CD4-positive, alpha-beta T cell (primary cell): ENCODE measurements at regions of chr12 and their contacts with region 1.

Region 1: GRCh38 chr12:13278249-13278787 is 81.8 kb downstream of the EMP1 start:
- DNase-seq: peak; percentile 18 to 77 (median 52)
- ATAC-seq: peak; percentile 91
- H3K4me3 ChIP-seq: no peak overlapping the region
- H3K4me3 Mint-ChIP-seq: no peak overlapping the region
- H3K27ac ChIP-seq: no peak overlapping the region
- H3K27ac Mint-ChIP-seq: no peak overlapping the region
- H3K4me1 ChIP-seq: peaks cover 6% of the 10 kb centered on the region
- H3K4me1 Mint-ChIP-seq: peaks cover 7% of the 10 kb centered on the region
- H3K27me3 ChIP-seq: peaks cover 18 to 42% of the 10 kb centered on the region in 2 experiments
- H3K27me3 Mint-ChIP-seq: peaks cover 42% of the 10 kb centered on the region
- CTCF ChIP-seq: peak; percentile 100

Region 2: DNA sequence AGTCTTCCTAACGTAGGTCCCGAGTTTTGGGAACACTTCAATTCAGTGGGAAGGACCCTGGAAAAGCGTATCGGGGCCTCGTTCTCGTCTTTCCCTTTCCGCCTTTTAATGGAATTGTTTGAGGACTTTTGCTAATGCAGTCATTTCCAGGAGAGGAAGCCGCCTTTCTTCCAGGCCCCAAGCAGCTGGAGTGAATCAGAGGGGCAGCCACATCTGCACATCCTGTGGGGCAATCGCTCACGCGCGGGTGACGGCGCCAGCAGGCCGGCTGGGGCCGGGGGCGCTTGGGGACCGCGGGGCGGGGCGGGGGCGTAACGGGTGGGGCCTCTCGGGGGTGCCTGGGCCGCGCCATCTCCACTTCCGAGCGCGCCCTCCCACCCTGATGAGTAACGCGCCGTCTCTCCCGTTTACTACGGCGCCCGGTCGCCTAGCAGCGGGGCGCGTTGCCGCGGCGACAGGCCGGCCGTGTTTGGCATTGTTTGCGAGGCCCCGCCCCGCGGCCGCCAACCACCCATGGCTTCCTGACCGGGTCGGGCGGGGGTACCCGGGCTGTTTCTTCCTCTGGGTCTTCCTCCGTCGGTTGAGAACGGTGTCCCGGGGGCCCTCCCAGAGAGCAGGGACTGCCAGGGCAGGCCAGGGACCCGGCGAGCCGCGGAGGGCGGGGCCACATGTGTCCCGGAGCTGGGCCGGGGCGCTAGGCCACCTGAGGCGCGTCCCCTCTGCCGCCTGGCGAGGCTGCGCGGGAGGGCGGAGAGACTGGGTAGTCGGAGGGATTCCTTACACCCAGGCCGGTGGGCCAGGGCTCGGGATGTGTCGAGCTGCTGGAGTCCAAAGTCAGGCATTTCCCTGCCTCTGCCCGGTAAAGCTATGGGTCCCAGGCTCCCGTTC is 177.2 kb before region 1 on chr12:
- CTCF ChIA-PET with region 1: no interaction called
- POLR2A ChIA-PET with region 1: no interaction called
- intact Hi-C with region 1: no loop called
- DNase-seq: peak; percentile 87 to 98 (median 92)
- ATAC-seq: peak; percentile 87
- H3K4me3 ChIP-seq: peak overlapping the region; percentile 64
- H3K4me3 Mint-ChIP-seq: peak overlapping the region; percentile 87
- H3K27ac ChIP-seq: peak overlapping the region; percentile 93 to 94
- H3K27ac Mint-ChIP-seq: peak overlapping the region; percentile 94
- H3K4me1 ChIP-seq: peaks cover 38% of the 10 kb centered on the region
- H3K4me1 Mint-ChIP-seq: peaks cover 53% of the 10 kb centered on the region
- H3K27me3 ChIP-seq: no peaks in the 10 kb centered on the region
- H3K27me3 Mint-ChIP-seq: no peaks in the 10 kb centered on the region
- CTCF ChIP-seq: no peak

Region 3: DNA sequence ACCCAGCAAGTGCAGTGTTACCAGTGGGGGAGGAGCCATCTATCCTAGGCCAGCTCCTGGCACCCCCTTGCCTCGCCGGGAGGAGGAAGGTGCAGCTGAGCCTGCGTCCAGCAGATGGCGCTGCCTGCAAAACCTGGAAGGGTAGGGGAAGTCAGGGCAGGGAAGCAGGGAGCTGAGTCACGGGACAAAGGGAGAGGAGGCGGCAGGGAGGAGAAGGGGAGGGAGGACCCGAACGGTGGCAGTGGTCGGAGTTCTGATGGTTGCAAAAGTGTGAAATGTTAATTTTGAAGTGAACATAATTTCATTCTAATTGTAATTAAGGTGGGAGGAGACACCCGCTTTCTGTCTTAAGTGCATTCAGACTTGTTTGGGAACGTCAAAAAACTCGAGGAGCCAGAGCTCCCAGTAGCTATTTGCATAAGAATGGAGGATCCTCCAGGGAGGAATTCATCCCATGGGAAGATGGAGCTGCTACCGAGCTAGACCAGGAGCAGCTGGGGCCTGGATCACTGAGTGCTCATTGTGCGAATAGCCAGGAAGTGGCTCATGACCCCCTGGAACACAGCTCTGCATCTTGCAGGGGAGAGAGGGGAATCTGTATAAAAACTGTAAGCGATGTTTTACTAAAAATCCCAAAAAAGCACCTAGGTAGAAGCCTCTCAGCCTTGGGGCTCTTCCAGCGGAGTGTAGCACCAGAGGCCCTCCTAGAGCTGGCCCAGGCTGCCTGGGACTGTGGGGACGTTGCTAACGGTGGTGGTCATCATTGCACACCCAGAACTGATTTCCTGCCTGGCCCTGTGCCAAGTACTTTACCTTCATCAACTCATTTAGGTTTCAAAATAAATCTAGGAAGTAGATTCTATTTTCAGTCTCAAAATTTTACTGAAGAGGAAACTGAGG is 22.3 kb before region 1 on chr12:
- CTCF ChIA-PET with region 1: interaction called, 15 read pairs
- POLR2A ChIA-PET with region 1: no interaction called
- intact Hi-C with region 1: no loop called
- DNase-seq: peak; percentile 47 to 85 (median 64)
- ATAC-seq: peak; percentile 99
- H3K4me3 ChIP-seq: no peak overlapping the region
- H3K4me3 Mint-ChIP-seq: no peak overlapping the region
- H3K27ac ChIP-seq: no peak overlapping the region
- H3K27ac Mint-ChIP-seq: no peak overlapping the region
- H3K4me1 ChIP-seq: peaks cover 6% of the 10 kb centered on the region
- H3K4me1 Mint-ChIP-seq: peaks cover 6% of the 10 kb centered on the region
- H3K27me3 ChIP-seq: peaks cover 0 to 3% of the 10 kb centered on the region in 2 experiments
- H3K27me3 Mint-ChIP-seq: peaks cover 5% of the 10 kb centered on the region
- CTCF ChIP-seq: peak; percentile 94

Region 4: DNA sequence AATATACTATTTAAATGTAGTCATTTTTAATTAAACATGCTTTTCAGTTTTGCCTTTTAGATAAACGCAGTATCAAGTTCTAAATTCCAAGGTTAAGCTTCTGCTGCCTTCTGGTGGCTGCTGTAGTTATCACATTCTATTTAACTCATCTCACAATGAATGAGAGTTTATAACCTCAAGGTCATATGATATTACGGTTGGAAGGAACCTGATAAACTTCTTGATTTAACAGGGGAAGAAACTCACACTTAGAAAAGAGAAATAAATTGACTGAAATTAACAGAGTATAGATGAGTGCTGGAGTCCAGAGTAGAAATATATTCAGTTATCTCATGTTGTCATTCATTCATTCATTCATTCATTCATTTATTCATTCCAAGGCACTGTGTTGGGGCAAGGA is 1386.2 kb after region 1 on chr12:
- CTCF ChIA-PET with region 1: no interaction called
- POLR2A ChIA-PET with region 1: no interaction called
- intact Hi-C with region 1: loop called in 1 of 2 experiments (anchors 5 kb)
- DNase-seq: peak in 10 of 14 experiments; percentile 11 to 74 (median 28)
- ATAC-seq: peak; percentile 97
- H3K4me3 ChIP-seq: no peak overlapping the region
- H3K4me3 Mint-ChIP-seq: no peak overlapping the region
- H3K27ac ChIP-seq: no peak overlapping the region
- H3K27ac Mint-ChIP-seq: no peak overlapping the region
- H3K4me1 ChIP-seq: no peaks in the 10 kb centered on the region
- H3K4me1 Mint-ChIP-seq: peaks cover 5% of the 10 kb centered on the region
- H3K27me3 ChIP-seq: peaks cover 0 to 2% of the 10 kb centered on the region in 2 experiments
- H3K27me3 Mint-ChIP-seq: peaks cover 6% of the 10 kb centered on the region
- CTCF ChIP-seq: peak; percentile 77